ENCODE measurements at regions of chr5 and their contacts with region 1.

Region 1: GRCh38 chr5:117454716-117455596 is 880.3 kb upstream of the SEMA6A start:
- DNase-seq: peak; percentile 29 to 51 (median 38)
- ATAC-seq: peak; percentile 68
- H3K4me3 ChIP-seq: no peak overlapping the region
- H3K27ac ChIP-seq: no peak overlapping the region
- H3K4me1 ChIP-seq: no peaks in the 10 kb centered on the region
- H3K27me3 ChIP-seq: no peaks in the 10 kb centered on the region
- CTCF ChIP-seq: peak; percentile 38 to 70 (median 57); a peak in 5 of 6 replicates
- EP300 ChIP-seq: no peak
- POLR2A ChIP-seq: no peak
- RAD21 ChIP-seq: peak; percentile 22 to 37; a peak in 1 of 4 replicates

Region 2: DNA sequence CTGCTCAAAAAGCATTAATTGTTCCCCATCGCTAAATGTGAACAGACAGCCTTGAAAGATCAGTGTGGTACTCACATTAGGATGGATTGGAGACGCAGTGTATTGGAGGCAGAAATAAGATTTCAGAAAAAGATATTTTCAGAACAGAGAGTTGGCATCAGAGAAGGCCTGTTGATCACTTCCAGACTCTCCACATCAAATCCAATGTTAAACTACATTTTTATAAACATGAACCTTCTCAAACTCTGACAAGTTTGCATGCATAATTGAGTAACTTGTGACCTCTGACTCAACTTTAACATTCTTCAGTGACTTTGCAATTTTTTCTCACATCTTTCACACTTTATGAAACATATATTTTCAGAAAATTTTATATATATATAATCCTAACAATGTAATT is 39.2 kb after region 1 on chr5:
- CTCF ChIA-PET with region 1: no interaction called
- POLR2A ChIA-PET with region 1: no interaction called
- in situ Hi-C with region 1: no loop called
- intact Hi-C with region 1: no loop called
- DNase-seq: no peak
- ATAC-seq: no peak
- H3K4me3 ChIP-seq: no peak overlapping the region
- H3K27ac ChIP-seq: no peak overlapping the region
- H3K4me1 ChIP-seq: no peaks in the 10 kb centered on the region
- H3K27me3 ChIP-seq: no peaks in the 10 kb centered on the region
- CTCF ChIP-seq: no peak
- EP300 ChIP-seq: no peak
- POLR2A ChIP-seq: no peak
- RAD21 ChIP-seq: no peak

Region 3: GRCh38 chr5:118791926-118792734 is 1337.2 kb after region 1 on chr5:
- CTCF ChIA-PET with region 1: no interaction called
- POLR2A ChIA-PET with region 1: no interaction called
- in situ Hi-C with region 1: no loop called
- intact Hi-C with region 1: loop called (anchors 10 kb)
- DNase-seq: peak; percentile 44 to 62 (median 50)
- ATAC-seq: peak; percentile 95
- H3K4me3 ChIP-seq: no peak overlapping the region
- H3K27ac ChIP-seq: no peak overlapping the region
- H3K4me1 ChIP-seq: no peaks in the 10 kb centered on the region
- H3K27me3 ChIP-seq: no peaks in the 10 kb centered on the region
- CTCF ChIP-seq: peak; percentile 53 to 80 (median 76)
- EP300 ChIP-seq: no peak
- POLR2A ChIP-seq: no peak
- RAD21 ChIP-seq: peak; percentile 71 to 83